Psoas muscle (tissue), 8 donors: ENCODE measurements at regions of chr1 and their contacts with region 1.

Region 1: DNA sequence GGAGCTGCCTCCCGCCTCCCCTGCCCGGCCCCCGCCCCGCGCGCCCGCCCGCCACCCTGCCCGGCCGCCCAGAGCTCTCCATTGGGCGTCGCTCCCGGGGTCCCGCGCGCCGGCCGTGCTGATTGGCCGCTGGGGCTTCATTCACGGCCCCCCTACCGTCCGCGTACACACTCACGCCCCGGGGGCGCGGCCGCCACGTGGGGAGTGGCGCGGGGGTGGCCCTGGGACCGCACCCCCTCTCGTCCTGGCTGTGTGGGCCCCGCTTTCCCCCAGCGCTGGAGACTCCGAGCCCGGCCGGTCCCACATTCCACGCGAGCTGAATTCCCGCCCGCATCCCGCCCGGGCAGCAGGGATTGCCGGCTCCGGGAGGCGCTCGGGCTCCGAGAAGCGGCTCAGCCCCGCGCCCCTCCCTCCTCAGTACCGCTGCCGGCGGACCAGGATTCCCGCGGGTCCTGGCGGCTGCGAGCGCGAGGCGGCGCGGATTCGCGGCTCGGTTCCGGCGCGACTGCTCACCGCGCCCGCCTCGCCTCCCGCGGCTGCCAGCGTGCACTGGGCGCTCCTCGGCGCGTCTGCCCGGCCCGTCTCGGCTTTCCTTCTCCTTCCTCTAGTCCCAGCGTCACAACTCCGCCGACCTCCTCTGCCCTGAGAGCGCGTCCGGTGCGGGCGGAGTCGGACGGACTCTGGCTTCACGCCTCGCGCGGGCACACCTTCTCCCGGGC is 450 bp upstream of the POU3F1 start:
- DNase-seq: peak; percentile 92 to 93
- ATAC-seq: peak; percentile 90 to 96 (median 93)
- H3K4me3 ChIP-seq: peak overlapping the region; percentile 71
- H3K27ac ChIP-seq: peak overlapping the region; percentile 64
- H3K4me1 ChIP-seq: peaks cover 17% of the 10 kb centered on the region
- H3K27me3 ChIP-seq: peaks cover 0 to 46% (median 22%) of the 10 kb centered on the region in 3 donors
- CTCF ChIP-seq: no peak

Region 2: DNA sequence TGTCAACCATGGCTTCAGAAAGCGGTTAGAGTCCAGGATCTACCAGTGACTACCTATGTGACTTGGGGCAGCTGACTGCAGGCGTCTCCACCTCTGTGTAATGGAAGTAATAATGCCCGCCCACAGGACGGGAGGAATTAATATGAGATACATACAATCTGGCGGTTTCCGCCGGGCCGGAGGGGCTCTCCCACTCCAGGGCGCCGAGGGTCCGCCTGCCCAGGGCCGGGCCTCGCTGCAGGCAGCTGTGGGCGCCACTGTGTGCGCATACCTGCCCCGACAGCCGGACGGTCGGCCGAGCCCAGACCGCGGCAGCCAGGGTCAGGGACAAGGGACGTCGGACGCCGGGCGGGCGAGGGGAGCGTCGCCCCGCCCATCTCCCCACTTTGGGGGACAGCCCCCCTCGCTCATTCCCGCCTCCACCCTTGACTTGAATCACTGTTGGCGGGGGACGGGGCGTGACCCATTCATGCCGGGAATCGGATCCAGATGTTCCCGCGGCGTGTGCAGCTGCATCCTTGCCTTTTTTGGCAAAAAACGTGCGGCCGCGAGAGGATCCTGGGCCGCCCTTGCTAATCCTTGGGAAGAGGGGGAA is 51.2 kb before region 1 on chr1:
- intact Hi-C with region 1: no loop called
- DNase-seq: peak; percentile 91 to 93
- ATAC-seq: peak; percentile 13 to 36 (median 29)
- H3K4me3 ChIP-seq: peak overlapping the region; percentile 60
- H3K27ac ChIP-seq: peak overlapping the region; percentile 88
- H3K4me1 ChIP-seq: peaks cover 42% of the 10 kb centered on the region
- H3K27me3 ChIP-seq: no peaks in the 10 kb centered on the region
- CTCF ChIP-seq: no peak

Region 3: GRCh38 chr1:38071312-38072256 is 24.5 kb after region 1 on chr1:
- intact Hi-C with region 1: loop called in 1 of 2 experiments (anchors 1 kb)
- DNase-seq: no peak
- ATAC-seq: peak in 1 of 4 donors; percentile 54
- H3K4me3 ChIP-seq: no peak overlapping the region
- H3K27ac ChIP-seq: no peak overlapping the region
- H3K4me1 ChIP-seq: no peaks in the 10 kb centered on the region
- H3K27me3 ChIP-seq: peaks cover 0 to 8% (median 0%) of the 10 kb centered on the region in 3 donors
- CTCF ChIP-seq: peak; percentile 14

Region 4: DNA sequence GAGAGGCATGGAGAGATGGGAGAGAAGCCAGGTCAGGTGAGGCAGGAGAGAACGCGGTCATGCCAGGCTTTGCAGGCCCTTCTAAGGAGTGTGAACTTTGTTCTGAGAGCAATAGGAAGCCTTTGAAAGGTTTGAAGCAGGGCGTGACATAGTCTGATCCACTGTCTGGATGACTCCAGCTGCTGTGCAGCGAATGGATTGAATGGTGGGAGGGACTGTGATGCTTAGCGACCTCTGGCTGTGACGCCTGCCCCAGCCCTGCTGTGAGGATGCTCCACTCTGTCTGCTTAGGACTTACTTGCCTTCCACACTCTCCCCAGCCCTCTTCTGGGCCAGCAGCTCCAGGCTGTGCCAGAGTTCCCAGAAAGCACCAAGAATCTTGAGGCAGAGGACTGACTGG is 41.3 kb after region 1 on chr1:
- intact Hi-C with region 1: no loop called
- DNase-seq: no peak
- ATAC-seq: no peak
- H3K4me3 ChIP-seq: no peak overlapping the region
- H3K27ac ChIP-seq: no peak overlapping the region
- H3K4me1 ChIP-seq: peaks cover 11% of the 10 kb centered on the region
- H3K27me3 ChIP-seq: no peaks in the 10 kb centered on the region
- CTCF ChIP-seq: no peak

Region 5: DNA sequence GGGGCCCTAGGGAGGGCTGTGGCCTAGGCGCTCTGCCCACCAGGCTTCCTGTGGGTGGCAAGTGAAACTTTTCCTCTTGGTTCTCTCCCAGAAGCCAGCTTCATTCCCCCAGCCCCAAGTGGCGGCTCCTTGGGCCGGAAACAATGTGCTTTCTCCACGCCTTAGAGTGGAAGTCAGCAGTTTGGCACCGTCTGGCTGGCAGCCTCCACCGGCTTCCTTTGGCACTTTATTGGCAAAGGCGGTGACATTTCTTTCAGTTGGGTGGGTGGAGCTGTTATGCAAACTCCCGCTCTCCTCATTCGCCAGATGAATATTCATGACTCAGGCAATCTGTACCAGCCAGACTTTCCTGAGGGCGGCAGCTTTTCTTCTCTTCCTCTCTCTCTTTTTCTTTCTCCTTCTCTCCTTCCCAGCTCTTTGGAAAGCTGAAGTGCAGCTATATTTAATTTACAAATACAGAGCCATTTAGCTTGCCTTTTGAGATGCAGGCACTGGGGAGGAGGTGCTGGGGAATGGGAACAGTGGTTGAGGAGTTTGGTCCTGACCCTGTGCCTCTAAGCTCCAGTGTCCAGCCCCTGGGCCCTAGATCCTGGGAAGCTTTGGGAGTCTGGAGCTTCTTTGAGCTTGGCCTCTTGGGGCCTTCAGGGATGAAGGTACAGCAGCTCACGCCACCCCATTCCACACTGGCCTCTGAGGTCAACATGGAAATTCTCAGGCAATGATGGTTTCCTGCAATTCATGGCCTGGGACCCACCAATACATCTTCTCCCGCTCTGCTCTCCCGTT is 67.4 kb after region 1 on chr1:
- intact Hi-C with region 1: no loop called
- DNase-seq: peak; percentile 26 to 70
- ATAC-seq: peak; percentile 61 to 92 (median 79)
- H3K4me3 ChIP-seq: no peak overlapping the region
- H3K27ac ChIP-seq: no peak overlapping the region
- H3K4me1 ChIP-seq: no peaks in the 10 kb centered on the region
- H3K27me3 ChIP-seq: peaks cover 0 to 4% (median 0%) of the 10 kb centered on the region in 3 donors
- CTCF ChIP-seq: no peak

Region 6: DNA sequence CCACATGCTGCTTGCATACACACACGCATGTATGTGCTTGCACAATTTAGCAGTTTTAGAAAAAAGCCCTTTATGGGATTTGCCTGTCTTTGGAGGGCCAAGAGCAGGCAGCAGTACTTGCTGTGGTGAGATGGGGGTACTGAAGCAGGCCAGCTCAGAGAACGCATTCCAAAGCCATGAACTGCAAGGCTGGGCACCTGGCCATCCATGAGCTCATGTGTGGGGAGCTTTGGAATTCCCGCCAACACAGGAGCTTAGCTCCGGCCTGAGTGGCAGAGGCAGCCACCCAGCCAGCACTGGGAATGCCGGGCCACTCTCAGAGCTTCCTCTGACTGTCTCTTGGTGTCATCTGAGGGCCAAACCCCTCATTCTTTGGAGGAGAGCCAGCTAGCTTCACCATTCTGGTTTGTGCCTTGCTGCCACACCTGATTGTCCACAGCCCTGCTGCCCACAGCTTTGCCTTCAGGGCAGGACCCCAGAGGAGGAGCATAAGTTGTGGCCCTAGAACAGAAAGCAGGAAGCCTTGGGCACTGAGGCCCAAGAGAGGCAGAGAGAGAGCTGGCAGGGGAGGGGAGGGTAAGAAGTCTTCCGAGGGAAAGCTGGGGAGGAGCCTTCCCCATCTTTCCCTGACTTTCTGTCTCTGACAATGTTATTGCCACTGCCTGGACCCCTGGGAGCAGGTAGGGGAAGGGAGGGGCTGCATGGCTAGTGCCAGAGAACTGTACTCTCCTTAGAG is 91.6 kb after region 1 on chr1:
- intact Hi-C with region 1: loop called in 1 of 2 experiments (anchors 5 kb)
- DNase-seq: peak; percentile 69 to 92
- ATAC-seq: peak; percentile 94 to 99 (median 98)
- H3K4me3 ChIP-seq: no peak overlapping the region
- H3K27ac ChIP-seq: peak overlapping the region; percentile 71
- H3K4me1 ChIP-seq: peaks cover 25% of the 10 kb centered on the region
- H3K27me3 ChIP-seq: peaks cover 0 to 5% (median 0%) of the 10 kb centered on the region in 3 donors
- CTCF ChIP-seq: peak; percentile 46

Region 7: GRCh38 chr1:38586993-38587646 is 540.1 kb after region 1 on chr1:
- intact Hi-C with region 1: loop called in 1 of 2 experiments (anchors 5 kb)
- DNase-seq: peak; percentile 34 to 57
- ATAC-seq: peak; percentile 59 to 70 (median 64)
- H3K4me3 ChIP-seq: no peak overlapping the region
- H3K27ac ChIP-seq: no peak overlapping the region
- H3K4me1 ChIP-seq: no peaks in the 10 kb centered on the region
- H3K27me3 ChIP-seq: peaks cover 0 to 3% (median 0%) of the 10 kb centered on the region in 3 donors
- CTCF ChIP-seq: peak; percentile 73

Region 8: GRCh38 chr1:38818175-38818976 is 771.3 kb after region 1 on chr1:
- intact Hi-C with region 1: loop called in 1 of 2 experiments (anchors 5 kb)
- DNase-seq: peak; percentile 36 to 61
- ATAC-seq: peak; percentile 42 to 61 (median 50)
- H3K4me3 ChIP-seq: peak overlapping the region; percentile 48
- H3K27ac ChIP-seq: no peak overlapping the region
- H3K4me1 ChIP-seq: peaks cover 5% of the 10 kb centered on the region
- H3K27me3 ChIP-seq: peaks cover 0 to 77% (median 14%) of the 10 kb centered on the region in 3 donors
- CTCF ChIP-seq: peak; percentile 69

Region 9: GRCh38 chr1:38834937-38835827 is 788.1 kb after region 1 on chr1:
- intact Hi-C with region 1: loop called in 1 of 2 experiments (anchors 10 kb)
- DNase-seq: no peak
- ATAC-seq: peak; percentile 80 to 95 (median 88)
- H3K4me3 ChIP-seq: no peak overlapping the region
- H3K27ac ChIP-seq: no peak overlapping the region
- H3K4me1 ChIP-seq: peaks cover 6% of the 10 kb centered on the region
- H3K27me3 ChIP-seq: no peaks in the 10 kb centered on the region
- CTCF ChIP-seq: peak; percentile 82